ENCODE measurements at regions of chr3 and their contacts with region 1.

Region 1: DNA sequence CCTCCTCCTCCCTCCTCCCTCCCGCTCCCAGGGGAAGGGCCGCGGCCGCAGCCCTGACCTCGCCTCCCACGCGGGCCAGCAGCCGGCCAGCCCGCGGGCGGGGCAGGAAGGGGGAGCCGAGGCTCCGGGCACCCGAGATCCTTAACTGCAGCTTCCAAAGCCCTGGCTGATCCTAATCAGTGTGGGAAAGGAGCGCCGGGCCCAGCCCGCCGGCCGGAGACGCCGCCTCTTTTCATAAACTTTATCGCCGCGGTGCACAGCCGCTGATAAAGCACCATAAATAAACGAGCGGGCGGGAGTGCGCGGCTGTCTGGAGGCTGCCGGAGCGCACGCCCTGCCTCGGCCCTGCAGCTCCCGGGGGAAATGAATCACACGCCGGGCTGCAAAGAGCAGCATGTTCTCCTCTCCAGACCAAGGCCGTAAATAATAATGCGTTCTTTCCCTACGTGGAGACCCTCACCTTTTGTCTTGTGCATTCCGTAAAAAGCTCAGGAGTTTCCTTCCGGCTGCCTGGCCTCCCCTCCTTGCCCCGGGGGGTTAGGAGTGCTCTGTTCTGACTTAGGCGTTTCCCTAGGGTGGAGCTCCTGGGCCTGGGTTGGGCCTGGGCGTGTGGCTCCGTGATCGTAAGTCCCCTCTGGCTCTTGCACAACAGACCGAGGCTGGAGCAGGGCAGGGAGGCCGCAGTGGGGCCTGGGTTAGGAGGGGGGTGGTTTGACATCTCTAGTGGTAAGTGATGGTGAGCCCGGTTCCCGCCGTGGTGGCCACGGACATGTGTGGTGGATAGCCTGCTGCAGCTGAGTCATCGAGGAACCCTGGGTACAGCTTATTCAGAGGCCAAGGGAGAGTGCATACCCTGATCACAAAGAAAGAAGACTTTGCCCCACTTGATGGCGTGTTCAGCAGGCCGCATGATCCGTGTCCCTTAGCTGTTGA is 132.6 kb upstream of the HES1 start:
- DNase-seq: peak; percentile 82 to 95
- ATAC-seq: peak; percentile 95 to 96
- H3K4me3 ChIP-seq: peak overlapping the region; percentile 44
- H3K27ac ChIP-seq: peak overlapping the region; percentile 86 to 95
- H3K4me1 ChIP-seq: peaks cover 33% of the 10 kb centered on the region
- CTCF ChIP-seq: no peak
- EP300 ChIP-seq: peak in 1 of 2 experiments; percentile 42; a peak in 1 of 5 replicates
- POLR2A ChIP-seq: no peak; the same call in 1 of the 2 replicates
- RAD21 ChIP-seq: peak in 1 of 2 experiments; percentile 22; a peak in 2 of 5 replicates

Region 2: GRCh38 chr3:193816590-193817311 is 186.6 kb before region 1 on chr3:
- CTCF ChIA-PET with region 1: no interaction called
- POLR2A ChIA-PET with region 1: interaction called, 12 read pairs
- DNase-seq: peak in 1 of 2 experiments; percentile 41
- ATAC-seq: peak in 1 of 2 experiments; percentile 85; a peak in 3 of 6 replicates
- H3K4me3 ChIP-seq: no peak overlapping the region
- H3K27ac ChIP-seq: peak overlapping the region in 1 of 2 experiments; percentile 48; a peak in 2 of 6 replicates
- H3K4me1 ChIP-seq: peaks cover 4% of the 10 kb centered on the region; the same call in 1 of the 3 replicates
- CTCF ChIP-seq: no peak
- EP300 ChIP-seq: no peak
- POLR2A ChIP-seq: no peak
- RAD21 ChIP-seq: no peak

Region 3: GRCh38 chr3:193982258-193982659 is 21.1 kb before region 1 on chr3:
- CTCF ChIA-PET with region 1: no interaction called
- POLR2A ChIA-PET with region 1: no interaction called
- DNase-seq: no peak
- ATAC-seq: no peak
- H3K4me3 ChIP-seq: no peak overlapping the region
- H3K27ac ChIP-seq: no peak overlapping the region
- H3K4me1 ChIP-seq: no peaks in the 10 kb centered on the region
- CTCF ChIP-seq: no peak
- EP300 ChIP-seq: no peak
- POLR2A ChIP-seq: no peak
- RAD21 ChIP-seq: no peak

Region 4: DNA sequence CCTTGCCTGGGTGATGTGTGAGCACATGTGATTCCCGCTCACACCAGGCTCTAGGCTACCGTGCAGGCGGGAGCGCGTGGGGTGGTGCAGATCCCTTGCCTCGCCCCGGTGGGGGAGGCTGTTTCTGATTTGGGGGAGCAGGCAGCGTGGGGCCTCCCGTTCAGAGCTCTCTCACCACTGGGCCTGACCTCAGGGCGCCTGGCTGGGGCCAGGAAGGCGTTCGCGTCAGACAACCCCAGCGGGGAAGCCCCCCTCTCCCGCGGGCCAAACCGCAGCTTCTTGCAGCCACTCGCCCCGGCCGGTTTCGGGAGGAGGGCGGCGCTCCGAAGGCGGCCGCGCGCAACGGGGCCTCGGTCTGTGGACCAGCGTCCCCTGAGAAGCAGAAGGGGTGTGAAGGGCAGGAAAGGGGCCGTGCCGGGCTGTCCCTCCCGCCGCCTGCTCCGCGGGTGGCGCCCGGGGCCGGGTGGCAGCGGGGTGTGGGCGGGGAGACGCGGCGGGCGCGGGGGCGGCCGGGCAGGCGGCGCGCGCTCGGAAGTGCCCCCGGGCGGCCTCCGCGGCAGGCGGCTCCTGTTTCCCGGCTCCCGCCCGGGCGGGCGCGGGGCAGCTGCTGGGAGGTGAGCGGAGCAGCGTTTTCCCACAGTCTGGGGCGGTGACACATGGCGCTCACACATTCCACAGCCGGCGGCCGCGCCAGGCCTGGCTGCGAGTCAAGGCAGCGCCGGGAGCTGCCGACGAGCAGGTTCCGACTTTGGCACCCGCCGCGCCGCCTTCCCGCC is 67.4 kb after region 1 on chr3:
- CTCF ChIA-PET with region 1: interaction called, 4 read pairs
- POLR2A ChIA-PET with region 1: interaction called, 12 read pairs
- DNase-seq: peak; percentile 58 to 84
- ATAC-seq: peak; percentile 78 to 80
- H3K4me3 ChIP-seq: peak overlapping the region; percentile 55
- H3K27ac ChIP-seq: peak overlapping the region; percentile 97 to 98
- H3K4me1 ChIP-seq: peaks cover 30% of the 10 kb centered on the region
- CTCF ChIP-seq: no peak
- EP300 ChIP-seq: peak; percentile 32 to 37; a peak in 1 of 5 replicates
- POLR2A ChIP-seq: no peak
- RAD21 ChIP-seq: no peak; a peak in 1 of 5 replicates

Region 5: GRCh38 chr3:194141415-194142155 is 138.2 kb after region 1 on chr3:
- CTCF ChIA-PET with region 1: interaction called, 4 read pairs
- POLR2A ChIA-PET with region 1: interaction called, 48 read pairs
- DNase-seq: peak; percentile 66 to 83
- ATAC-seq: peak; percentile 53 to 59
- H3K4me3 ChIP-seq: peak overlapping the region; percentile 47
- H3K27ac ChIP-seq: peak overlapping the region; percentile 99 to 100
- H3K4me1 ChIP-seq: peaks cover 41% of the 10 kb centered on the region
- CTCF ChIP-seq: no peak
- EP300 ChIP-seq: peak; percentile 16 to 56; a peak in 2 of 5 replicates
- POLR2A ChIP-seq: no peak; the same call in 1 of the 2 replicates
- RAD21 ChIP-seq: 0 out of 5 replicates have a peak, but pooled peaks of 1 of the 2 experiments have one; percentile 18